Naive thymus-derived CD8-positive, alpha-beta T cell (primary cell): ENCODE measurements at regions of chr11 and their contacts with region 1.

Region 1: GRCh38 chr11:61332797-61333549 is at the starts of genes DDB1 and TKFC:
- DNase-seq: peak; percentile 95 to 98 (median 97)
- ATAC-seq: peak; percentile 92 to 93
- H3K4me3 Mint-ChIP-seq: peak within 1 kb of the TSS; percentile 84 to 99 (median 96)
- H3K27ac Mint-ChIP-seq: peak within 1 kb of the TSS; percentile 96 to 100 (median 98)
- H3K4me1 Mint-ChIP-seq: peaks cover 38 to 70% (median 66%) of the 10 kb centered on the region in 4 donors
- H3K27me3 Mint-ChIP-seq: no peaks in the 10 kb centered on the region
- polyA plus RNA-seq, gene DDB1: 105 to 125 (median 124) TPM
- polyA plus RNA-seq, gene TKFC: 18.3 to 25.3 (median 18.4) TPM

Region 2: GRCh38 chr11:61361686-61362541 is 28.9 kb after region 1 on chr11 and contains the starts of genes CYB561A3 and TMEM138:
- POLR2A ChIA-PET with region 1: interaction called, 42 read pairs
- DNase-seq: peak; percentile 77 to 91 (median 82)
- ATAC-seq: peak; percentile 86 to 92
- H3K4me3 Mint-ChIP-seq: peak within 1 kb of the TSS; percentile 95 to 99 (median 97)
- H3K27ac Mint-ChIP-seq: peak within 1 kb of the TSS; percentile 95 to 99 (median 98)
- H3K4me1 Mint-ChIP-seq: peaks cover 7 to 60% (median 37%) of the 10 kb centered on the region in 4 donors
- H3K27me3 Mint-ChIP-seq: no peaks in the 10 kb centered on the region
- polyA plus RNA-seq, gene CYB561A3: 54.5 to 69.3 (median 58.4) TPM
- polyA plus RNA-seq, gene TMEM138: 44.8 to 49.7 (median 47.0) TPM

Region 3: DNA sequence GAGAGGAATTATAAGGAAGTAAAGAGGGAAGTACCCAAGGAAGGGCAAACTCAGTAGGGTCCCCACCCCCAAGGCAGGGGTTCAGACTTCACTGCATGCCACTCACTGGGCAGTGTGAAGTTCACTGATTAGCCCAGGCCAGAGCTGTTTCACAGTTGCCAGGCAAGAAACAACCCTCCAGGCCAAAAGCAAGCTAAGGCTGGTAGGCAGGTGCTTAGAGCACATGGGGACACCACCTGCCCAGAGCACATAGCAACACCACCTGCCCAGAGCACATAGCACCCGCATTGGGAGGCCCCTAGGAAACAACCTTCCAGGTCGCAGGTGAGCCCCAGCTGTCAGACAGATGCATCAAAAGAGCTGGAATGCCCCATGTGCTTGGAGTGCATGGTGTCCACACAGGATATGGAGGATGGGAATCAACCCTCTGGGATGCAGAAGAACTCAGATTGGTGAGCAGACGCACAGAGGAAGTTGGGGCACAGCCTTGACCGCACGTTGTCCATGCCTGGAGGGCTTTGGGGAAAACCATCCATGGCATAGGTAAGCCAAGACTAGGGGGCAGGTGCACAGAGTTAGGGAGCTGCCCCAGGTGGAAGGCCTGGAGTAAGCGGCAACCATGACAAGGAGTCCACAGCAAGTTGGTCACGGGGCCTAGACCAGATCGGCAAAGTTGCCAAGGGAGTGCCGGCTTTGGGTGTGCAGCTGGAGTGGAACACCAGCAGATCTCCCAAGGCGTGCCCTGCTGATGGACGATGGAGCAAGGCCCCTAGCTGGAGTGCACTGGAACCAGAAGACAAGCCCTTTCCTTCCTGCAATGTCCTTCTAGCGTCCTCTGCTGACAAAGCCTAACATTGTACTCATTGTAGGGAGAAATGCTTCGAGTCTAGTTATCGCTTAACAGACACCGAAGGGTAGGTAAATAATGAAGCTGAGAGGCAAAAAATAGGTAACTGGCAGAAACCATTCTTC is 51.6 kb after region 1 on chr11:
- POLR2A ChIA-PET with region 1: interaction called, 63 read pairs
- DNase-seq: no peak
- ATAC-seq: no peak
- H3K4me3 Mint-ChIP-seq: no peak overlapping the region
- H3K27ac Mint-ChIP-seq: no peak overlapping the region
- H3K4me1 Mint-ChIP-seq: peaks cover 0 to 9% (median 6%) of the 10 kb centered on the region in 4 donors
- H3K27me3 Mint-ChIP-seq: no peaks in the 10 kb centered on the region

Region 4: GRCh38 chr11:61392981-61393595 is 60.1 kb after region 1 on chr11:
- POLR2A ChIA-PET with region 1: interaction called, 62 read pairs
- DNase-seq: peak in 5 of 10 donors; percentile 10 to 43 (median 32)
- ATAC-seq: peak; percentile 54 to 59
- H3K4me3 Mint-ChIP-seq: peak overlapping the region; percentile 90 to 98 (median 96)
- H3K27ac Mint-ChIP-seq: peak overlapping the region; percentile 94 to 99 (median 98)
- H3K4me1 Mint-ChIP-seq: peaks cover 12 to 35% (median 26%) of the 10 kb centered on the region in 4 donors
- H3K27me3 Mint-ChIP-seq: no peaks in the 10 kb centered on the region

Region 5: DNA sequence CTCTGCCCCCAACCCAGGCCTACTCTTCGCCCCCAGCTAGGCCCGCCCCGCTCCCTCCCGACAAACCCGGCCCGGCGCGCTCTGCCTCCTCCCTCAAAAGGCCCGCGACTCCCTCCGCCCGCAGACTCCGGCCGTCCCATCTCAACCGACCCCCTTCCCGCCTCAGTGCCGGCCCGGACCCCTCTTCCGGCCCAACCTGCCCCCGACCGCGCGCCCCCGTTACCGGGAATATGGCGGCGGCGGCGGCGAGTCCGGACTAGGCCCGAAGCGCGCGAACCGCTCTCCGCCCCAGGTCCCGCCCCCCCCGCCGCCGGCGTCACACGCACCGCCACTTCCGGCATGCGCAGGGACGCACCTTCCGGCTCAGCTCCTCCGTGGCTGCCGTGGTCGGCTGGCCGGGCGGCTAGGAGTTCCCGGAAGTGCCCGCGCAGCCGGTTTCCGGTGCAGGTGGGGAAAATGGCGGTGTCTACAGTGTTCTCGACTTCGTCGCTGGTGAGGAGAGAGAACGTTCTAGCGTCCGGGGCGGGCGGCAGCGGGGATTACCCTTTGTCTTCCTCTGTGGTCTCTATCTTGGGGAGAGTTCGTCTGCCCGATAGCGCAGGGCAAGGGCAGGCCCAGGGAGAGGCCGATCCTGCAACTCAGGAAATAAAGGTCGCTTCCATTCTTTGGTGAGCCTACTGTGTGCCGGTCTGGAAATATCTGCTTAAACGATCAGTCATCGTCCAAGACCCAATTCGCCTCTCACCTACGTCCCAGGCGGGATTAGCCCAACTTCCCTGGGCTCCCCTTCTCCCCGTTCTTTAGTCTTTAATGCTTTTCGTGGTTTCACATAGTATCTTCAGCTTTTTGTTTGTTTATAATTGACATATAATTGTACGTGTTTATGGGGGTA is 97.0 kb after region 1 on chr11 and contains the starts of genes CPSF7 and SDHAF2:
- POLR2A ChIA-PET with region 1: interaction called, 24 read pairs
- DNase-seq: peak; percentile 95 to 98 (median 97)
- ATAC-seq: peak; percentile 89
- H3K4me3 Mint-ChIP-seq: peak within 1 kb of the TSS; percentile 93 to 99 (median 96)
- H3K27ac Mint-ChIP-seq: peak within 1 kb of the TSS; percentile 98 to 100 (median 99)
- H3K4me1 Mint-ChIP-seq: peaks cover 18 to 81% (median 70%) of the 10 kb centered on the region in 4 donors
- H3K27me3 Mint-ChIP-seq: no peaks in the 10 kb centered on the region
- polyA plus RNA-seq, gene CPSF7: 20.6 to 34.8 (median 26.0) TPM
- polyA plus RNA-seq, gene SDHAF2: 92.1 to 118 (median 97.8) TPM